ENCODE measurements at regions of chr12 and their contacts with region 1.

Region 1: GRCh38 chr12:71799106-71799505 is 40.5 kb upstream of the TBC1D15 start:
- DNase-seq: peak; percentile 80
- H3K4me3 ChIP-seq: peak overlapping the region; percentile 12
- H3K27ac ChIP-seq: peak overlapping the region; percentile 91
- H3K4me1 ChIP-seq: peaks cover 52% of the 10 kb centered on the region
- H3K27me3 ChIP-seq: no peaks in the 10 kb centered on the region
- CTCF ChIP-seq: no peak

Region 2: DNA sequence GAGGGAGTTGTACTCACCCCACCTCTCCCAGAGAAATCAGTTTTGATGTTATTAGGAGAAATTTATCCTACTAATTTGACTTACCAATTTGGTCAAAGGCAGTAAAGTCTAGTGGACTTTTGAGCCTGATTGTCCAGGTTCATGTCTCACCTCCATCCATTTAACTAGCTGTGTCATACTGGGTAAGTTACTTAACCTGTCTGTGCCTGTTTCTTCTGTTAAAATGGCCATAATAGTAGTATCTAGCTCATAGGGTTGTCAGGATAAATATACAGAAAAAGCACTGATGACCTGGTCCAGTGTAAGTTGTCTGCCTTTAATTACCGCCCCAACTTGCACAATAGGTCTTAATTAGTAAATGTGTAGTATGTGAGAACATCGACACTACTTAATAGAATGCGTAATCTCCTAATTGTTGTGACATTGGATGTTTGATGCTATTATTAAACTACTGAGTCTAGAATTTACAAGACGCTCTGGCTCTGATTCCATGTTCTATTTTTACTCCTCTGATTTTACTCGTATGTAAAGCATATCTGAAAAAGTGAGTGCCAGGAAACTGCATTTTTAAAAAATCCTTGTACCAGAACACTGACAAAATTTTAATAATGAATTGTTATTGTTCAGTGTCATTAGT is 42.9 kb before region 1 on chr12:
- CTCF ChIA-PET with region 1: no interaction called
- POLR2A ChIA-PET with region 1: no interaction called
- intact Hi-C with region 1: no loop called
- DNase-seq: no peak
- H3K4me3 ChIP-seq: peak overlapping the region; percentile 96
- H3K27ac ChIP-seq: no peak overlapping the region
- H3K4me1 ChIP-seq: peaks cover 3% of the 10 kb centered on the region
- H3K27me3 ChIP-seq: no peaks in the 10 kb centered on the region
- CTCF ChIP-seq: no peak

Region 3: DNA sequence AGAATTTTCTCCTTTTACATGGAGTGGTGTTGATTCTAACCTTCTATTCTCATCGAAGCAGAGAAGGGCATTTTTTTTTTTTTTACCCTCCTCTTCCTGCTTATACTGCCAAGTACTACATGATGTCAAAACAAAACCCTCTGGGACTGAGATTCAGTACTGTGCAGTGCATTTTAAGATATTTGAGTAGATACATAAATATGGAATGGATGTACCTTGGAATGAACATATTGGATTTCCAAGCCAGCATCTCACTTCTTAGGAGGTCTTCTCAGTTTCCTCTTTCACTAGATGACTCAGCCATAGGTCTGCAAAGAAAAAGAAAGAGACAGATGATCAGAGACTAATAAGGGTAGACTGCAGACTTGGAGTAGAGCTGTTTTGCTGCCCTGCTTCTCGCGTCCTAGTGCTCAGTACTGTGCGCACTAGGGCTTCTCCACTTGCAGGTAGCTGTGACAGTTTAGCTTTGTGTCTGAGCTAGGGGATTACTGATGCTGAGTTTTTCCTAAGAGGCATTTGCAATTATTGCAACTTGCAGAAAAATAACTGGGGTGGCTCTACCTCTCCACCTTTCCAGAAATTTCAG is 160.0 kb after region 1 on chr12:
- CTCF ChIA-PET with region 1: no interaction called
- POLR2A ChIA-PET with region 1: no interaction called
- intact Hi-C with region 1: no loop called
- DNase-seq: peak; percentile 52
- H3K4me3 ChIP-seq: no peak overlapping the region
- H3K27ac ChIP-seq: no peak overlapping the region
- H3K4me1 ChIP-seq: peaks cover 22% of the 10 kb centered on the region
- H3K27me3 ChIP-seq: no peaks in the 10 kb centered on the region
- CTCF ChIP-seq: no peak

Region 4: DNA sequence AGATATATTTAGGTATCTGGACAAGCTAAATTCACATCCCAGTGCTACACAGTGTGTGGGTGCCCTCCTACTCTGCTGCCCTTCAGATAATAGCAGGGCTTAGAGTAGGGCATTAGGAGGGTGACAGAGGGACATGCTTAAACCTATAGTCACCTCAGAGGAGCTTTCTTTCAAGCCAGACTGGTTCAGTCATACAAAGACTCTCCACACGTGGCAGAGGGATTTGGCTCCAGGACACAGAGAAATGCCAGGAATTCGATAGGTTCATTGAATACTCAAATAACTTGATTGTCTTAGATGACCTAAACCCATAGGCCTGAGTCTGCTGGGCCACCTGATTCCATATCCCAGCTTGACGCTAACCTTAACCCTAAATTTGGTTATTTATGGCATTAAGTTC is 303.0 kb after region 1 on chr12:
- CTCF ChIA-PET with region 1: no interaction called
- POLR2A ChIA-PET with region 1: interaction called, 10 read pairs
- intact Hi-C with region 1: no loop called
- DNase-seq: no peak
- H3K4me3 ChIP-seq: no peak overlapping the region
- H3K27ac ChIP-seq: no peak overlapping the region
- H3K4me1 ChIP-seq: no peaks in the 10 kb centered on the region
- H3K27me3 ChIP-seq: no peaks in the 10 kb centered on the region
- CTCF ChIP-seq: no peak